ENCODE measurements at regions of chr3 and their contacts with region 1.

Region 1: DNA sequence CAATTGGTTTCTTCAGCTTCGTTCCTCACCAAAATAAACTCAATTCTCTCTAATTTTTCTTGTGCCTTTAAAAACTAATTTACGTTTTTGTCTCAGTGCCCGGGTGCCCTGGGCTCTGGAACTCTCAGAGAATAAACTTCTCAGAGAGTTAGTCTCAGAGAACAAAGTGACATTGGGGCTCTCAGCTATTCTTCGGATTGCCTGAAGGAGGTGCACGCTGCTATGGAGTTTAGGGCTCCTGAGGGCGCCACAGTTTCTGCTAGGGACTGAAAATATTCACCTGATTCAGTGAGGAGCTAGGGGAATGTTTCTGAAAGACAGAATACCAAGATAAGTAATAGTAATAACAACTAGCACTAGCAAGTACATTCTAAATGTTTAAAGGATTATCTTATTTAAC is 22.7 kb downstream of the ZIC4 start:
- DNase-seq: peak in 1 of 2 experiments; percentile 48
- H3K4me3 ChIP-seq: no peak overlapping the region
- H3K27ac ChIP-seq: no peak overlapping the region
- H3K4me1 ChIP-seq: peaks cover 16 to 41% (median 33%) of the 10 kb centered on the region in 4 experiments
- H3K27me3 ChIP-seq: peaks cover 60 to 87% (median 79%) of the 10 kb centered on the region in 4 experiments
- CTCF ChIP-seq: peak; percentile 60 to 77 (median 75)
- EP300 ChIP-seq: no peak
- POLR2A ChIP-seq: no peak
- RAD21 ChIP-seq: peak; percentile 74 to 77

Region 2: DNA sequence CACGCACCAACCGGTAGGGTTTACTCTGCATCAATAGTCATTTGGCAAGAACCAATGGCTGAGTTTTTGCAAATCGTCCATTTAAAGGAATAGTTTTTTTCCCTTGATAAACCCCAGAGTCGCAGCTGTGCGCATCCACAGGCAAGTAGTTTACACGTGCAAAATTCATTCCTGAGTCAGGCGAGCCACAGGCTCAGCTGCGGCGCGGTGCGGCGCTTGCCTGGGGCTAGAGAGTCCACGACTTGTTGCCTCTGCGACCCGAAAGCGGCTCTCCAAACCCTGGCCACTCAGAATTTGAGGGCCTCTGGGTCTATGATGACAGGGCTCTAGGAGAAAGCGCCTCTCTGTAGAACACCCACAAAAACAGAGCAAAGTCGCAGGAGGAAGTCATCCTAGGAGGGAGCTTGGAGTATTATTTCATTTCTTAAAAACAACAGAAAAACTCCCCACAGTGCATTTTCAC is 13.9 kb before region 1 on chr3:
- CTCF ChIA-PET with region 1: interaction called, 44 read pairs
- POLR2A ChIA-PET with region 1: interaction called, 8 read pairs
- DNase-seq: peak in 1 of 2 experiments; percentile 60
- H3K4me3 ChIP-seq: peak overlapping the region in 2 of 4 experiments; percentile 3 to 22; a peak in 5 of 8 replicates
- H3K27ac ChIP-seq: no peak overlapping the region
- H3K4me1 ChIP-seq: peaks cover 4 to 17% (median 16%) of the 10 kb centered on the region in 4 experiments
- H3K27me3 ChIP-seq: peaks cover 72 to 93% (median 86%) of the 10 kb centered on the region in 4 experiments
- CTCF ChIP-seq: no peak
- EP300 ChIP-seq: no peak
- POLR2A ChIP-seq: no peak
- RAD21 ChIP-seq: no peak

Region 3: DNA sequence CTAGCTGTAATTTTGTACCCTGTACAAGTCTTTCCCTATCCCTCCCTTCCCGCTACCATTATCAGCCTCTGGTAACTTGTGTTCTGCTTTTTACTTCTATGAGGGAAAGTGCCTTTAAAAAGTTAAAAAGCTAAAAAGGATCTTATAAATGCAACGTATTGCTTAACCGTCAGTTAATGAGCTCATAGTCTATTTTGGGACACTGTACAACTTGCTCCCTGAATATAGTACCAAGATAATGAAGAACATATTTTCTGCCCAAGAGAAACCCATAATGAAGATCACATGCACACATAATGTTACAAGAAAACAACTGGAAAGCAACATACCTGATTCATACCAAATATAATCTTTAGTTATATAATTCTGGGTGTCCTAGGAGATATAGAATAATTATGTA is 48.1 kb after region 1 on chr3:
- CTCF ChIA-PET with region 1: interaction called, 485 read pairs
- POLR2A ChIA-PET with region 1: no interaction called
- DNase-seq: no peak
- H3K4me3 ChIP-seq: no peak overlapping the region
- H3K27ac ChIP-seq: no peak overlapping the region
- H3K4me1 ChIP-seq: no peaks in the 10 kb centered on the region
- H3K27me3 ChIP-seq: peaks cover 0 to 1% (median 0%) of the 10 kb centered on the region in 4 experiments; a peak in 2 of 7 replicates
- CTCF ChIP-seq: no peak
- EP300 ChIP-seq: no peak
- POLR2A ChIP-seq: no peak
- RAD21 ChIP-seq: no peak

Region 4: GRCh38 chr3:147483578-147483977 is 100.0 kb after region 1 on chr3:
- CTCF ChIA-PET with region 1: no interaction called
- POLR2A ChIA-PET with region 1: no interaction called
- DNase-seq: no peak
- H3K4me3 ChIP-seq: no peak overlapping the region
- H3K27ac ChIP-seq: no peak overlapping the region
- H3K4me1 ChIP-seq: no peaks in the 10 kb centered on the region
- H3K27me3 ChIP-seq: no peaks in the 10 kb centered on the region
- CTCF ChIP-seq: no peak
- EP300 ChIP-seq: no peak
- POLR2A ChIP-seq: no peak
- RAD21 ChIP-seq: no peak

Region 5: DNA sequence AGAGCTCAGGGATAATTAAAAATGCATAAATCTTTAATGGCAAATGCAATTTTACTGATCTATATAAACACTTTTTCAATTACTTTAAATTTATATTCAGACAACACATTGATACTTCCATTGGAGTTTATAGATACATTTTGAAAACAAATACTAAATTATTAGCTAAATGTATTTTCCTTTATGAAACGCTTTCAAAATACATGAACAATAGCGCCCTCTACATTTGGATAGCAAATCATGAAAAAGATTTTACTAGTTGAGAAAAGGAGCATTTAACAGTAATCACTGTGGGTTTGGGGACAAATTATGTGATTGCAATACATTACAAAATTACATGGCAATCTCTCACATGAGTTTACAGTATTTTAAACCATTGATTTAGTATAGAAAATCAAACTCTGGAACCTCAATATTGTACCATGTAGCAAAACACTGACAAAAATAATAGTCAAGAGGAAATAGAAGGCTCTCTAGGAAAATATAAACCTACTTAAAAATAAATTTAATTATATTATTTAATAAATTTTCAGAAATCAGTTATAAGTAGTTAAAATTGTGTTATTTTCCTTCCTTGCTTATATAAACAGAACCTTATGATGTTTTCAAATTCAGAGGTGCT is 233.5 kb after region 1 on chr3:
- CTCF ChIA-PET with region 1: interaction called, 19 read pairs
- POLR2A ChIA-PET with region 1: no interaction called
- DNase-seq: no peak
- H3K4me3 ChIP-seq: no peak overlapping the region
- H3K27ac ChIP-seq: no peak overlapping the region
- H3K4me1 ChIP-seq: peaks cover 0 to 3% (median 0%) of the 10 kb centered on the region in 4 experiments; a peak in 1 of 7 replicates
- H3K27me3 ChIP-seq: no peaks in the 10 kb centered on the region
- CTCF ChIP-seq: peak in 1 of 3 experiments; percentile 49; a peak in 2 of 4 replicates
- EP300 ChIP-seq: no peak
- POLR2A ChIP-seq: no peak
- RAD21 ChIP-seq: peak in 1 of 2 experiments; percentile 52

Region 6: GRCh38 chr3:148075763-148076716 is 692.4 kb after region 1 on chr3:
- CTCF ChIA-PET with region 1: interaction called, 12 read pairs
- POLR2A ChIA-PET with region 1: no interaction called
- DNase-seq: peak in 1 of 2 experiments; percentile 7
- H3K4me3 ChIP-seq: no peak overlapping the region
- H3K27ac ChIP-seq: no peak overlapping the region
- H3K4me1 ChIP-seq: no peaks in the 10 kb centered on the region; a peak in 1 of 7 replicates
- H3K27me3 ChIP-seq: no peaks in the 10 kb centered on the region
- CTCF ChIP-seq: peak in 2 of 3 experiments; percentile 65 to 73; a peak in 3 of 4 replicates
- EP300 ChIP-seq: no peak
- POLR2A ChIP-seq: no peak
- RAD21 ChIP-seq: peak; percentile 84 to 90